GM10248 (cell line): ENCODE measurements at regions of chr12 and their contacts with region 1.

Region 1: DNA sequence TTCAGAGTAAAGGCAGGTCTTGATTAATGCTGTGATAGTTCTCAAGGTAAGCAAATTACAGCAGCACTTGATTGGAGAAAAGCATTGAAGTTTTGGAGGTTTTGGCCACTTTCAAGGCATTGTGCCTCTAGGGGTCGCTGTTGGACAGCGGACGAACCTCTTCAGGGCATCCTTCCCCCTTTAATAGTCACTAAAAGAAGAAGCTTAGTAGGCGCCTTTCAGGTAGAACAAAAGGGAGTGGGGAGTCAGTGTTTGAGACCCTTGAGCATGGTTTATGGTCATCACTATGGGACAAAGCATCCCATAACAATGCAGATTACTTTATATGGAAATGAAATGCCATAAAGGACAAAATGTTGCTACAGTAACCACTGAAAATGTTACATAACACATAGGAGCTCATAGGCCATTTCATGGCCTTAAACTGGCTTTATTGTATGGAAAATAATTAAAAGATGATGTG is 199.5 kb upstream of the DCN start:
- DNase-seq: peak; percentile 32
- CTCF ChIP-seq: peak; percentile 77

Region 2: GRCh38 chr12:91295324-91295723 is 86.8 kb before region 1 on chr12:
- CTCF ChIA-PET with region 1: no interaction called
- POLR2A ChIA-PET with region 1: no interaction called
- DNase-seq: no peak
- CTCF ChIP-seq: no peak

Region 3: DNA sequence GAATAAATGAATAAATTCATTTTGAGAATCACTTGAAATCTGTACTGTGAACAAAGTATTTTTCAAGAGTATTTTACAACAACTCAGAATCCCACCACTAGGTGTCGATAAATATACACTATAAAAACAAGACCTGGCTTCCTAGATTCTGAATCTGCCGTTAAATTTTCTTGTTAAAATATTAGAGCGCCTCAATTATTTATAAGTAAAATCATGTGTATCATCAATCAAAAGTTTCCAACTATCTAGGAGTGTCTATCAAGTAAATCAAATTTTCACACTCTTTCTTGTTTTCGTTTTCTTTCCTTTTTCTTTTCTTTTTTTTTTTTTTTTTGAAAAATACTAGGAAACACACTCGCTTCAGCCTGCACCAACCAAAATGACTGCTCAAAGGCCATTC is 20.2 kb before region 1 on chr12:
- CTCF ChIA-PET with region 1: interaction called, 21 read pairs
- POLR2A ChIA-PET with region 1: no interaction called
- DNase-seq: peak; percentile 20
- CTCF ChIP-seq: peak; percentile 49

Region 4: DNA sequence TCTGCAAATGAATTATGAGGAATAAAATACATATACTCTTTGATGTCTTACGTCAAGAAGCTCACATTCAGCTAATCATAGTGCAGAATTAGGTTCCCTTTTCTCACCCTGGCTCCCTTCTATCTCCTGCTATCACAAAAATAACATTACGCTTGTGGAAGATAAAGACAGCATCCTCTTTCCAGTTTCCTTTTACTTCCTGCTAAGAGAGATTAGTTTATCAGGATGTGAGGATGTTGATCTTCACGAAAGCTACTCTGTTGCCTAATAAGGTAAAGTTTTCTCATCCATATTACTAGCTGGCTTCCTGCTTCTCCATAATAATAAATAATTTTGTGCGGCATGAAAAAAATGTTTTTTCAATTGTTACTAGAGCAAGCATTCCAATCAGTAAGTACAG is 18.2 kb after region 1 on chr12:
- CTCF ChIA-PET with region 1: interaction called, 23 read pairs
- POLR2A ChIA-PET with region 1: no interaction called
- DNase-seq: no peak
- CTCF ChIP-seq: no peak

Region 5: DNA sequence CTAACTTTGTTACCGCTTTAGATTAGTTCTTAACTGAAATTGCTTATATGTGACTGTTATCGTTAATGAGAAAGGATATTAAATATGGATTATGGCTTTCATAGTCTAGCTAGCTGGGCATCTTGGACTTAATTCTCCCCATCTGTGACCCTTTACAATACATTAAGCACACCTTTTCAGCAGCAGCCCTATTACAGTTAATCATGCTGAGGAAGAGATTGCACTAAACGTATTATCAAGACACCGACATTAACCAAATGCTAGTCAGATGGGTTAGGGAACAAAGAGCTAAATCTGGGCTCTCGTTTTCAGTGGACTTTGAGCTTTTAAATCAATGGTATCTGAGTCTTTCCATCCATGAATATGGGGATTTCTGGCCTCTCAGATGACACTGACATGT is 248.0 kb after region 1 on chr12:
- CTCF ChIA-PET with region 1: no interaction called
- POLR2A ChIA-PET with region 1: no interaction called
- DNase-seq: no peak
- CTCF ChIP-seq: no peak

Region 6: GRCh38 chr12:91804533-91804932 is 422.4 kb after region 1 on chr12:
- CTCF ChIA-PET with region 1: no interaction called
- POLR2A ChIA-PET with region 1: no interaction called
- DNase-seq: no peak
- CTCF ChIP-seq: no peak

Region 7: DNA sequence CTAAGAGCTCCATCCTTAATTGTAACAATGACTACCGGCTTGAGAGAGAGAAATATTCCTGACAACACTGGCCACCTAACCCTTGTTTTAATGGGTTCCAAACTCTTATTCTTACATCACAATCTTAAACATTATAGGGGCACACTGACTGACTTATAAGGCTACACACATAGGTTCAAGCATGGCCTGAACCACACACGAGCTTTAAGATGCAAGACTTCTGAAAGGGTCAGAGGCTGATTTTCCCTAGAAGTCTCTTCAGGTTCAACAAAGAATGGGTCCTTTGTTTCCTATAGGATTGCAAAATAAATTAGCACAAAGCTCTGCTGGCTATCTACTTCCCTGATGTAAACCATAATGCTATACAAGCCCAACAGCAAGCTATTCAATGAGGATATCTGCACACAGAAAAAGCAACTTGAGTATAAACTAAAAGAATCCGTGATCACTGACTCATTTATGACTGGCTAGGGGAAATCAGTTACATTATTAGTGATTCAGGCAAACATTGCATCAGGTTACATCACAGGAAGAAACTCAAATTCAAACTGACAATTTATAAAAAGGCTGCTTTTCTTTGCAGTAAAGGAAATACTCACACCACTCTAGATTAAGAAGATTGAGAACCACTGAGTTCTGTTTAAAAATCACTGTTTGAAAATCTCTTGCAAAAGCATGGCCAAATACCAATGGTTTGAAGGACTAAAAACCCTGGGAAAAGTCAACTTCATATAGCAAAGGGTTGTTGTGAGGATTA is 755.0 kb after region 1 on chr12:
- CTCF ChIA-PET with region 1: interaction called, 11 read pairs
- POLR2A ChIA-PET with region 1: interaction called, 4 read pairs
- DNase-seq: no peak
- CTCF ChIP-seq: no peak

Region 8: DNA sequence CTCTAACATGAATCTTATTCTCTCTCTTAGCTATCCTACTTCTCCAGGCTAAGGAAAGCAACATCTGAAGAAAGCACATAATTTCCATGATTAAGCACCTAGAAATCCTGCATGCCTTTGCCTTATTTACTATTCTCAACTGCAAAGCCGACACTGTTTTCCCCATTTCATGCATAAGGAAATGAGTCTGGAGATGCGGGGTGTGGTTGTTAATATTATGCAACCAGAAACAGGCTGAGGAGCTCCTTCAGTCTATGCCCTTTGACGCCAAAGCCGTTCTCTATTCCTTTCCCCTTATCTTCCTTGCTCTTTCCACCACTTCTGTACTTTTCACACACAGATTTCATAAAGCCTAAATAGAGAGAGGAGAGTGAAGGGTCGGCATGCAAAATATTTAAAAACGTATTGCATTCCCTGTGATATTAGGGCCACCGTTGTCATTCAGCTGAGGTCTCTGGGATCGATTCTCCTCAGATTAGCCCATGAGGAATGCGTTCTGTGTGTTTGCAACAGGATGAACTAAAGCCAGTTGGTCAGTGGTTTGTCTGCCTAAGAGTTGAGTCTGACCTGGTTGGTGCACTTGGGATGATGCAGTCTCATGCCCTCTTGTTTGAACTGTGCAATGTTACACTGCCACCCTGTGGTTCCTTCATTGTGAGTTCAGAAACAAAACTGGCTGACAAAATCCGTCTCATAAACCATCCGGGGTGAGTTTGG is 1267.6 kb after region 1 on chr12:
- CTCF ChIA-PET with region 1: interaction called, 68 read pairs
- POLR2A ChIA-PET with region 1: no interaction called
- DNase-seq: peak; percentile 66
- CTCF ChIP-seq: peak; percentile 70